ENCODE measurements at regions of chr21 and their contacts with region 1.

Region 1: DNA sequence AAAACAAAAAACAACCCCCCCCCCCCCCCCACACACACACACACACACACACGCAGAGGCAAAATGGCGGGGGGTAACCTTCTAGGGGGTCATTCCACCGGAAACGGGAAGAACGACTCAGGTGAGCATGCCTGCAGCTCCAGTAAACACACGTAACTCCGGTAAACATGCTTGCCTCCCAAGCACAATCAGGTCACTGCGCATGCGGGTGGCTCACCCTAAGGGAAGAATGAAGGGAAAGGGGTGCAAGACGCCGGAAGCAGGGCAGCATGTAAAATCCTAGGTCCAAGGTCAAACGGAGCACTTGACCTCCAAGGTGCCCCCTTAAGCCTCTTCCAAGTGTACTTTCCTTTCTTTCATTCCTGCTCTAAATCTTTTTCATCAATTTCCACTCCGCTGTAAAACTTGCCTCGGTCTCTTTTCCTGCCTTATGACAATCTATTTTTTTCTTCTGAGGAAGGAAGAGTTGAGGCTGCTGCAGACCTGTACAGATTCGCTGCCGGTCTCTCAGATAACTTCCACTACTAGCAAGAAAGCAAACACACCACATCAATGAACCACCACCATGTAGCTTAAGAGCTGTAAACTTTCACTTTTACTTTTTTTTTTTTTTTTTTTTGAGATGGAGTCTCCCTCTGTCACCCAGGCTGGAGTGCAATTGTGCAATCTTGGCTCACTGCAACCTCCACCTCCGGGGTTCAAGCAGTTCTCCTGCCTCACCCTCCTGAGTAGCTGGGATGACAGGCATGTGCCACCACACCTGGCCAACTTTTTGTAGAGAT is 21.0 kb upstream of the CBR3 start:
- DNase-seq: peak in 8 of 9 donors; percentile 49 to 90 (median 74)
- ATAC-seq: peak; percentile 92
- H3K4me3 ChIP-seq: peak overlapping the region; percentile 64
- H3K4me3 Mint-ChIP-seq: peak overlapping the region; percentile 67 to 100 (median 88)
- H3K27ac ChIP-seq: peak overlapping the region; percentile 72
- H3K27ac Mint-ChIP-seq: peak overlapping the region; percentile 85 to 98 (median 92)
- H3K4me1 ChIP-seq: peaks cover 0 to 19% of the 10 kb centered on the region in 2 donors
- H3K4me1 Mint-ChIP-seq: peaks cover 16 to 45% (median 28%) of the 10 kb centered on the region in 7 donors
- H3K27me3 ChIP-seq: no peaks in the 10 kb centered on the region
- H3K27me3 Mint-ChIP-seq: peaks cover 0 to 10% (median 0%) of the 10 kb centered on the region in 5 donors

Region 2: GRCh38 chr21:35528116-35529042 is 585.5 kb before region 1 on chr21:
- CTCF ChIA-PET with region 1: no interaction called
- POLR2A ChIA-PET with region 1: no interaction called
- intact Hi-C with region 1: loop called in 1 of 2 experiments (anchors 5 kb)
- DNase-seq: peak; percentile 14 to 57 (median 42)
- ATAC-seq: peak; percentile 70
- H3K4me3 ChIP-seq: peak overlapping the region; percentile 91
- H3K4me3 Mint-ChIP-seq: peak overlapping the region; percentile 82 to 93 (median 90)
- H3K27ac ChIP-seq: peak overlapping the region; percentile 84
- H3K27ac Mint-ChIP-seq: peak overlapping the region; percentile 94 to 98 (median 96)
- H3K4me1 ChIP-seq: peaks cover 7 to 31% of the 10 kb centered on the region in 2 donors
- H3K4me1 Mint-ChIP-seq: peaks cover 34 to 61% (median 51%) of the 10 kb centered on the region in 7 donors
- H3K27me3 ChIP-seq: no peaks in the 10 kb centered on the region
- H3K27me3 Mint-ChIP-seq: no peaks in the 10 kb centered on the region

Region 3: GRCh38 chr21:35690436-35690835 is 423.4 kb before region 1 on chr21:
- CTCF ChIA-PET with region 1: no interaction called
- POLR2A ChIA-PET with region 1: no interaction called
- intact Hi-C with region 1: no loop called
- DNase-seq: no peak
- ATAC-seq: no peak
- H3K4me3 ChIP-seq: no peak overlapping the region
- H3K4me3 Mint-ChIP-seq: no peak overlapping the region
- H3K27ac ChIP-seq: no peak overlapping the region
- H3K27ac Mint-ChIP-seq: no peak overlapping the region
- H3K4me1 ChIP-seq: no peaks in the 10 kb centered on the region
- H3K4me1 Mint-ChIP-seq: peaks cover 0 to 5% (median 0%) of the 10 kb centered on the region in 7 donors
- H3K27me3 ChIP-seq: no peaks in the 10 kb centered on the region
- H3K27me3 Mint-ChIP-seq: peaks cover 12 to 26% (median 23%) of the 10 kb centered on the region in 5 donors

Region 4: DNA sequence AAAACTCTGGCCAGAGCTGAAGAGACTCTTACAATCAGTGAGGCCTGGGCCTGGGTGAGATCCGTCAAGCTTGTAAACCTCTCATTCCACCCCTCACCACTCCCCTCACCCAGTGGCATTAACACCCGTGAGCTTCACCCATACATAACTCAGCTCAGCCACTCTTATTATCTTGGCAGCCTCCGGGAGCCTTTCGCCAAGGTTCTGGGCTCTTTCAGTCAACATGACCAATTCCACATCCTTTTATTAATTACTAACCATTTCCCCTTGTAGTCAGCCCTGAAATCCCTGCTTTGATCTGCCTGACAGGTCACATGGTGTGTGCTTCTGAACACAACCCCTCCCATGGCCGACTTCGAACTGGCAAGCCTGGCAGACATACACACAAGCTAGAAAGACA is 188.3 kb before region 1 on chr21:
- CTCF ChIA-PET with region 1: no interaction called
- POLR2A ChIA-PET with region 1: no interaction called
- intact Hi-C with region 1: loop called in 1 of 2 experiments (anchors 5 kb)
- DNase-seq: peak in 4 of 9 donors; percentile 11 to 23 (median 12)
- ATAC-seq: no peak
- H3K4me3 ChIP-seq: no peak overlapping the region
- H3K4me3 Mint-ChIP-seq: no peak overlapping the region
- H3K27ac ChIP-seq: no peak overlapping the region
- H3K27ac Mint-ChIP-seq: no peak overlapping the region
- H3K4me1 ChIP-seq: no peaks in the 10 kb centered on the region
- H3K4me1 Mint-ChIP-seq: no peaks in the 10 kb centered on the region
- H3K27me3 ChIP-seq: no peaks in the 10 kb centered on the region
- H3K27me3 Mint-ChIP-seq: peaks cover 8 to 29% (median 14%) of the 10 kb centered on the region in 5 donors

Region 5: DNA sequence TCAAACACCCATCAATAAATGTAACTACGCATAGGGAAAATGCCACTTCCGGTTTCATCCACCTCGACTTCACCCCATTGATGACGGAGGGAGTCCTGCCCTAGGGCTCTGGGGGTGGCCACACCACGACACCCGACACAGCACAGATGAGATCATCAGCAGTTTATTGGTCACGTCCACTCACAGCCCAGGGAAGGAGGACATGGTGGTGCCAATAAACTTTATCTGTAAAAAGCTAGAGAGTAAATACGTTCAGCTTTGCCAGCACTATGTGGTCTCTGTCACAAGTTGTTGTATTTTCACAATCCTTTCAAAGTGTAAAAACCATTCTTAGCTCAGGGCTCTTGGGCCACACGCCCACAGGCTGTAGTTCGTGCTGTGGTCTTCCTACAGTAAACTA is 69.8 kb before region 1 on chr21:
- CTCF ChIA-PET with region 1: no interaction called
- POLR2A ChIA-PET with region 1: no interaction called
- intact Hi-C with region 1: loop called in 1 of 2 experiments (anchors 5 kb)
- DNase-seq: no peak
- ATAC-seq: no peak
- H3K4me3 ChIP-seq: no peak overlapping the region
- H3K4me3 Mint-ChIP-seq: no peak overlapping the region
- H3K27ac ChIP-seq: no peak overlapping the region
- H3K27ac Mint-ChIP-seq: no peak overlapping the region
- H3K4me1 ChIP-seq: no peaks in the 10 kb centered on the region
- H3K4me1 Mint-ChIP-seq: peaks cover 0 to 5% (median 2%) of the 10 kb centered on the region in 7 donors
- H3K27me3 ChIP-seq: no peaks in the 10 kb centered on the region
- H3K27me3 Mint-ChIP-seq: no peaks in the 10 kb centered on the region

Region 6: DNA sequence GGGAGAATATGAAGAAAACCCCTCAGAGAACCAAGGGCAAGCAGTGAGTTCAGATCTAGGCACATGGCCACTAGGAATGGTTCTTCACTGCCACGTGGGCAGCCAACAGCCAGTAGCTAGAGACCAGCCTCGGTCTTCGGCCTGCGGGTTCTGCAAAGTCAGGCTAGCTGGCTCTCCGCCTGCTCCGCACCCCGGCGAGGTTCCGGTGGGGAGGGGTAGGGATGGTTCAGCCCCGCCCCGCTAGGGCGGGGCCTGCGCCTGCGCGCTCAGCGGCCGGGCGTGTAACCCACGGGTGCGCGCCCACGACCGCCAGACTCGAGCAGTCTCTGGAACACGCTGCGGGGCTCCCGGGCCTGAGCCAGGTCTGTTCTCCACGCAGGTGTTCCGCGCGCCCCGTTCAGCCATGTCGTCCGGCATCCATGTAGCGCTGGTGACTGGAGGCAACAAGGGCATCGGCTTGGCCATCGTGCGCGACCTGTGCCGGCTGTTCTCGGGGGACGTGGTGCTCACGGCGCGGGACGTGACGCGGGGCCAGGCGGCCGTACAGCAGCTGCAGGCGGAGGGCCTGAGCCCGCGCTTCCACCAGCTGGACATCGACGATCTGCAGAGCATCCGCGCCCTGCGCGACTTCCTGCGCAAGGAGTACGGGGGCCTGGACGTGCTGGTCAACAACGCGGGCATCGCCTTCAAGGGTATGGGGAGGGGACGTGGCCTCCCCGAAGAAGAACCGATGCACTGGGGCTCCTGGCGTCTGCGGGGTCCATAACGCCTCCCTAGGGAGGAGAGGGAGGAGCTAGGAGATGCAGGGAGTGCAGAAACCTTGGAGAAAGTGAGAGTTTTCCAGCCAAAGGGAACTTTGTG is 43.9 kb before region 1 on chr21 and contains the start of gene CBR1:
- CTCF ChIA-PET with region 1: interaction called, 3 read pairs
- POLR2A ChIA-PET with region 1: no interaction called
- intact Hi-C with region 1: loop called (anchors 2 kb)
- DNase-seq: peak; percentile 62 to 90 (median 84)
- ATAC-seq: peak; percentile 98
- H3K4me3 ChIP-seq: peak within 1 kb of the TSS; percentile 73
- H3K4me3 Mint-ChIP-seq: peak within 1 kb of the TSS; percentile 83 to 93 (median 90)
- H3K27ac ChIP-seq: peak within 1 kb of the TSS; percentile 65
- H3K27ac Mint-ChIP-seq: peak within 1 kb of the TSS; percentile 63 to 93 (median 82)
- H3K4me1 ChIP-seq: peaks cover 5 to 21% of the 10 kb centered on the region in 2 donors
- H3K4me1 Mint-ChIP-seq: peaks cover 12 to 47% (median 41%) of the 10 kb centered on the region in 7 donors
- H3K27me3 ChIP-seq: no peaks in the 10 kb centered on the region
- H3K27me3 Mint-ChIP-seq: no peaks in the 10 kb centered on the region
- total RNA-seq, gene CBR1: 6.0 to 51.1 (median 22.1) TPM

Region 7: GRCh38 chr21:36135391-36136102 is 21.7 kb after region 1 on chr21:
- CTCF ChIA-PET with region 1: interaction called, 3 read pairs
- POLR2A ChIA-PET with region 1: interaction called, 5 read pairs
- intact Hi-C with region 1: loop called (anchors 1 kb)
- DNase-seq: peak; percentile 25 to 76 (median 41)
- ATAC-seq: peak; percentile 84
- H3K4me3 ChIP-seq: peak overlapping the region; percentile 81
- H3K4me3 Mint-ChIP-seq: peak overlapping the region; percentile 83 to 98 (median 92)
- H3K27ac ChIP-seq: peak overlapping the region; percentile 58
- H3K27ac Mint-ChIP-seq: peak overlapping the region; percentile 79 to 94 (median 88)
- H3K4me1 ChIP-seq: peaks cover 4 to 13% of the 10 kb centered on the region in 2 donors
- H3K4me1 Mint-ChIP-seq: peaks cover 11 to 33% (median 26%) of the 10 kb centered on the region in 7 donors
- H3K27me3 ChIP-seq: no peaks in the 10 kb centered on the region
- H3K27me3 Mint-ChIP-seq: no peaks in the 10 kb centered on the region